WTC11 (cell line): ENCODE measurements at regions of chr11 and their contacts with region 1.

Region 1: GRCh38 chr11:116357784-116358544 is 414.8 kb downstream of the BUD13 start:
- DNase-seq: peak; percentile 83
- ATAC-seq: peak; percentile 89
- H3K4me3 Mint-ChIP-seq: no peak overlapping the region
- H3K27ac Mint-ChIP-seq: 0 out of 2 replicates have a peak overlapping the region, but pooled peaks have one; percentile 34
- H3K4me1 Mint-ChIP-seq: peaks cover 51% of the 10 kb centered on the region
- H3K27me3 Mint-ChIP-seq: peaks cover 5% of the 10 kb centered on the region; the same call in 1 of the 2 replicates
- CTCF ChIP-seq: peak; percentile 92

Region 2: DNA sequence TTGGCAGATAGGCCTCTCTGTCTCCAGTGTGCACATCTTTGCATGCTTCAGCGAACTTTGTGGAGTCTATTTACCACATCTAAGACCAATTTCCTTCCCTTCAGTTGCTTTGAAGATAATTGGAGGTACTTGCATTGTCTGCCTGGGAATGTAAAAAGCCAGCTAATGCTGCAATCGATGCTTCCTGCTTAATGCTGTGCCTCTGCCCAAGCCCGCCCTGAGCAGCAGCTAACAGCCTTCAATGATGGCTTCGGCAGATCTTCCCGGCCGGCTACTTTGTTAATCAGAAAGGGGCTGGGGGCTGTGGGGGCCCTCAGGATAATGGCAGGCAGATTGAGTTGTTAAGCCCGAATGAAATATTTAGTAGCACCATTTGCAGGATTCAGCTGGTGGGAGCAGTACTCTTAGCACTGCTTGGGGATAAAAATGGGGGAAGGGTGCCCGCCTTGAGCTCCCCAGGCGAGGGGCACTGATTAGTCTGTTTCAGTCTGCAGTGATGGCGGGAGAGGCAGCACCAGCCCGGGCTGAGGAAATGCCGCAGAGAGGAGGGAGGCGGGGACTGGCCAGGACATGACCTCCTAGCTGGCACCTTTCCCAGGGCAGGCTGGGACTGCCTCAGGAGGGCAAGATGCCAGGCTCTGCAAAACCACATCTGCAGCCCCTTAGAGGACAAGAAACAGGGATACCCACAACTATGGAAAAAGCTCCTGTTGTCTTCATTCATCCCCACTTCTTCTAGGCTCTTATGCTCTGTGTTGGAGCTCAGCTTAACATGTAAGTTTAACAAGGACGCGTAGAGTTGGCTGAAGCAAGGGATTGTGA is 45.2 kb before region 1 on chr11:
- CTCF ChIA-PET with region 1: interaction called, 10 read pairs
- POLR2A ChIA-PET with region 1: no interaction called
- DNase-seq: no peak
- ATAC-seq: peak; percentile 53
- H3K4me3 Mint-ChIP-seq: no peak overlapping the region
- H3K27ac Mint-ChIP-seq: no peak overlapping the region
- H3K4me1 Mint-ChIP-seq: peaks cover 60% of the 10 kb centered on the region
- H3K27me3 Mint-ChIP-seq: no peaks in the 10 kb centered on the region
- CTCF ChIP-seq: no peak

Region 3: GRCh38 chr11:116420770-116421528 is 63.0 kb after region 1 on chr11:
- CTCF ChIA-PET with region 1: interaction called, 32 read pairs
- POLR2A ChIA-PET with region 1: no interaction called
- DNase-seq: no peak
- ATAC-seq: no peak
- H3K4me3 Mint-ChIP-seq: no peak overlapping the region
- H3K27ac Mint-ChIP-seq: no peak overlapping the region
- H3K4me1 Mint-ChIP-seq: peaks cover 39% of the 10 kb centered on the region
- H3K27me3 Mint-ChIP-seq: peaks cover 2% of the 10 kb centered on the region; the same call in 1 of the 2 replicates
- CTCF ChIP-seq: no peak

Region 4: DNA sequence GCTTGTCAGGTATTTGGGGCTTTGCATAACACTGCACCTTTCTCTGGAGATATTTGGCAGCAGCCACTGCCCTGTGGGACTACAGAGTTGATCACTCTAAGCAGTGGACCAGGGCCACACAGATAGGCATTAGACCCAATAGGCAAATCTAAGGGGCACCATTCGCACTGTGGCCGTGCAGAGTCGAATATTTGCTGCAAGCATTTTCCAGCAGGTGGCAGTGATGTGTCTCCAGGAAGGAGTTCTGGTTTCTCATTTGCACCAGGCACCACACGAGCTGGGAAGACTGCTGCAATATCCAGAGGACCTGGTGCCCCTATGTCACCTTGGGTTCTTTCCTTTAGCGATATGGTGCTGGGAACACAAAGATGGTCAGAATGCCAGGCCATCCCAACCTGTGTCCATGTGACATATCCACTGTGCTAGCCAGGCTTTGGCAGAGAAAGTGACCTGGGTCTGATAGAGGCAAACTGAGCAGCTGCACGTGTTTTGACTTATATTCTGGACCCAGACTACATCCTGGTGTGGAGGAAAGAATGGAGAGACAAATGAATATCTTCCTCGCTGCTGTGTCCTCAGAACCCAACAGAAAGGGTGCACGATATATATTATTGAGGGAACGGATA is 96.2 kb after region 1 on chr11:
- CTCF ChIA-PET with region 1: interaction called, 17 read pairs
- POLR2A ChIA-PET with region 1: no interaction called
- DNase-seq: peak; percentile 76
- ATAC-seq: peak; percentile 79
- H3K4me3 Mint-ChIP-seq: no peak overlapping the region
- H3K27ac Mint-ChIP-seq: no peak overlapping the region
- H3K4me1 Mint-ChIP-seq: peaks cover 51% of the 10 kb centered on the region
- H3K27me3 Mint-ChIP-seq: peaks cover 14% of the 10 kb centered on the region
- CTCF ChIP-seq: no peak; the same call in 1 of the 2 replicates

Region 5: GRCh38 chr11:116505298-116506262 is 147.6 kb after region 1 on chr11:
- CTCF ChIA-PET with region 1: interaction called, 59 read pairs
- POLR2A ChIA-PET with region 1: no interaction called
- DNase-seq: no peak
- ATAC-seq: no peak
- H3K4me3 Mint-ChIP-seq: no peak overlapping the region
- H3K27ac Mint-ChIP-seq: no peak overlapping the region
- H3K4me1 Mint-ChIP-seq: peaks cover 69% of the 10 kb centered on the region
- H3K27me3 Mint-ChIP-seq: peaks cover 26% of the 10 kb centered on the region
- CTCF ChIP-seq: no peak

Region 6: DNA sequence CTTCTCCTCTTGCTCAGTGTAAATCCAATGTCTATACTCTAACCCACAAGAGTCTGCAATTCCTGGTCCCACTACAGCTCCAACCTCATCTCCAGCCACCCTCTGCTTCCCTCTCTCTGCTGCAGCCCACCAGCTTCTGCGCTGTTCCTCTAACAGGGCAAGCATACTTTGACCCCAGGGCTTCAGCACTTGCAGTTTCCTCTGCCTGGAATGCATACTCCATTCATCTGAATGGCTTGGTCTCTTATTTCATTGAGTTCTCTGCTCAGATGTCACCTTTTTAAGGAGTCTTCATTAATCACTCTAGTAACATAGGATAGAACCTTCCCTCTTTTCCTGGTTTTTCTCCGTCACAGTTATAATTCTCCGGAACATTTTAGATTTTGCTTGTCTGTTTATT is 273.2 kb after region 1 on chr11:
- CTCF ChIA-PET with region 1: no interaction called
- POLR2A ChIA-PET with region 1: no interaction called
- DNase-seq: no peak
- ATAC-seq: no peak
- H3K4me3 Mint-ChIP-seq: no peak overlapping the region
- H3K27ac Mint-ChIP-seq: no peak overlapping the region
- H3K4me1 Mint-ChIP-seq: peaks cover 5% of the 10 kb centered on the region
- H3K27me3 Mint-ChIP-seq: peaks cover 6% of the 10 kb centered on the region; the same call in 1 of the 2 replicates
- CTCF ChIP-seq: no peak